ENCODE measurements at regions of chr1 and their contacts with region 1.

Region 1: DNA sequence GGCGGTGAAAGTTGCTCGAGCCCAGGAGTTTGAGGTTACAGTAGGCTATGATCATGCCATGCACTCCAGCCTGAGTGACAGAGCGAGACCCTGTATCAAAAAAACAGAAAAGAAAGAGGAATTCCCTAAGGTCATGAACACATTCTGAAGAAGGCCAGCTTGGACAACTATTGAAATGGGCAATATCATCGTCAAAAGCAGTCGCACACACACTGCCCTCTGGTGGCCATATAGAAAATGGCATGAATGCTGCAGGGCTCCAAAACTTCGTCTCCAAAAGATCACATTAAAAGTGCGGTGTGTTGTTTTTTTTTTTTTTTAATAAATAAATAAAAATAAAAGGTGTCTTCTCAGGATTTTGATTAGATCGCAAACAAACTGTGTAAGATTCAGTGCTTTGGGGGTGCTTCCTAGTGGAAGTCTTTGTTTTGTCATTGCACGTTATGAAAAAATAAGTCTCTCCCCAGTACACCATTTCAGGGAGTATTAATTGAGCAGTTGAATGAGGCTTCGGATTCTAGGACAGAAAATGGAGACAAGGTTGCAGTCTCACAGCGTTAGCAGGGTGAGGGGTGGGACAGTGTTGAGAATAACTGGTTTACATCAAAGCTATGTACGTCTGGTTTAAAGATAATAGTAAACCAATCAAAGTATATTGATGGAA is 87.5 kb upstream of the FMN2 start:
- DNase-seq: no peak
- H3K4me3 ChIP-seq: no peak overlapping the region
- H3K27ac ChIP-seq: no peak overlapping the region
- H3K27me3 ChIP-seq: peaks cover 2% of the 10 kb centered on the region
- CTCF ChIP-seq: peak; percentile 85

Region 2: DNA sequence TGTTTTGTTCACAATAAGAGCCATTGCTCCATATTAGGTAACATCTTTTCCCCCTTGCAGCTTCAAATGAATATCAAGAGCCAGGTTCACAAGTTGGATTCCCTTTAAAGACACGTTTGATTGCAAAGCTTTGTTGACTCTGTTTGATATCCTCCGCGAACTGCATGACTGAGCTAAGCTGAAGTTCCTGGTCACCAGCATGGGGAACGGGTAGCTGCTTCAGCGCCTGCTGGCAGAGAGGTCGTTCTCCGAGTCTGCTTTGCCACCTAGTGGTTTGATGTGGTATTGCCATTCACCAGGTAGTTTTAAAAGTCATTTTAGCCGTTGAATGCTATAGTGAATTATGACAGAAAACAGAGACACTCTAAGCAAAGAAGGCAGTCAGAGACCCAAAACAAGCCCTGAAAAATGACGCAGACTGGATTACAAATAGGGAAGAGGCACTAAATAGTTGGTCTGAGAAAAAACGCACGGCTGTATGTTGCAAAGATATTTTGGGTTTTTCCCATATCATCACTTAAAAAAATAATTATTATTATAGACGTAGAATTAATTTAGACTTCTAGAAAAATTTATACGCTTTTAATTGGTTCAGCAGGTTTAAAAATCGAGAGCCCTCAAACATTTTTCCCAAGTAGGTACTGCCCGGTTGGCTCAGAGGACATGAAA is 106.0 kb before region 1 on chr1:
- CTCF ChIA-PET with region 1: no interaction called
- POLR2A ChIA-PET with region 1: no interaction called
- DNase-seq: peak; percentile 41
- H3K4me3 ChIP-seq: 0 out of 2 replicates have a peak overlapping the region, but pooled peaks have one; percentile 17
- H3K27ac ChIP-seq: no peak overlapping the region
- H3K27me3 ChIP-seq: no peaks in the 10 kb centered on the region
- CTCF ChIP-seq: peak; percentile 98

Region 3: GRCh38 chr1:239987103-239987745 is 17.0 kb before region 1 on chr1:
- CTCF ChIA-PET with region 1: interaction called, 30 read pairs
- POLR2A ChIA-PET with region 1: no interaction called
- DNase-seq: peak; percentile 10
- H3K4me3 ChIP-seq: no peak overlapping the region
- H3K27ac ChIP-seq: no peak overlapping the region
- H3K27me3 ChIP-seq: peaks cover 4% of the 10 kb centered on the region
- CTCF ChIP-seq: peak; percentile 79

Region 4: GRCh38 chr1:240021709-240022108 is 17.5 kb after region 1 on chr1:
- CTCF ChIA-PET with region 1: interaction called, 10 read pairs
- POLR2A ChIA-PET with region 1: no interaction called
- DNase-seq: no peak
- H3K4me3 ChIP-seq: no peak overlapping the region
- H3K27ac ChIP-seq: no peak overlapping the region
- H3K27me3 ChIP-seq: no peaks in the 10 kb centered on the region
- CTCF ChIP-seq: no peak

Region 5: DNA sequence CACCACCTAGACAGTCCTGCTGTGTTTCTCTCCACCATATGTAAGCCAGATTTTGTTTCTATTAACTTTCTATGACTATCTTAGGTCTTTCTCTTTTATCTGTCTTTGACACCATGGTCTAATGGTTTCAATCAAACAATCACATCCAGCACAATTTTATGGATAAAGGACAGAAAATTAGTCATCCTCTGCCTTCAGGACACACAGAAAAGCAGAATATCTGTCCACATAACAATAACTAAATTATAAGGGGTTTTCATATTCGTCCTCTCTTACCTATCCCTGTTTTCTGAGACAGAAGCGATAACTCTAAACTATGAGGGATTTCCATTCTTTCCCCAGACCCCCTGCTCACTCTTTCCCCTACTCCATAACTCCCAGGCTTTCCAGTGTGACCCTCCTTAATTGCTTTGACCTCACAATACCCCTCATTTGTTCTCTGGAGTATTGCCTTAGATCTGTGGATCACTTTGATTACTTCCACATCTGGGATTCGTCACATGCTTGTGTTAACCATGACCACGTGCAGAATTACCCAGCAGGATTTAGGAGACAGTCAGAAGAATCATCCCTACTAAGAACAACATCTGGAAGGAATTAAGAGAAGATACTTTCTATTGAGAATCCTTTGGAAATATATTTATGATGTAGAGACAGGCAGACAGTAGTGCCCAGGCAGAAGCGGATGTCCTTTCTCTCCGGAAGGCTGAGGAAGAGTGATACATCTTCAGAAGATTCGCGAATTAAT is 715.9 kb after region 1 on chr1:
- CTCF ChIA-PET with region 1: interaction called, 13 read pairs
- POLR2A ChIA-PET with region 1: no interaction called
- DNase-seq: no peak
- H3K4me3 ChIP-seq: no peak overlapping the region
- H3K27ac ChIP-seq: no peak overlapping the region
- H3K27me3 ChIP-seq: no peaks in the 10 kb centered on the region
- CTCF ChIP-seq: no peak